ENCODE measurements at regions of chr4 and their contacts with region 1.

Region 1: DNA sequence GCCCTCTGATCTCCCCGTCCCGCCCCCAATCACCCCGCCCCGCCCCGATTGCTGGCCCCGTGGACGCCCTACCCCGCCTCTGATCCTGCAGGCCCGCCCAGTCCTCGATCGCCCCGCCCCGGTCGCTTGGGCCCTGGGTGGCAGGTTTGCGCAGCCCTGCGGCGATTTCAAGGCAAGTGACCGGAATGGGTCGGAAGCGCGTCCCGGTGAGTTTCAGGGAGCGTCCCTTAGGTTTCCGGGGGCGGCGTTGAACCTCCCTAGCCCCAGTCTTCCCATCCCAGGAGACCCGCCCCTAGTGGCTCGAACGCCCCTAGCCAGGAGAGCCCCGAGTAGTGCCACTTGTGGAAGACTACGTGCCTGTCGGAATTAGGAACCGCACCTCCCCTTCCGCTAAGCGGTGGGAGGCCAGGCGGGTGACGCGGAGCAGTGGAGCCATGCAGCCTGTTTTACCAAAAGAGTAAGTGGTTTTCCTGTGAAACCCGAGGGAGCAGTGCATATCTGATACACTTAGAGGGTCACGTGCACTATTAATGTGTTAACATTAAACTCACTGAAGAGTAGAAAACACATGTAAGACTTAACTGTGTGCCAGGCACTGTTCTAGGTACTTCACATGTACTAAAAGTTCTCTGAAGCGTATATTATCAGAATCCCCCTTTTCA is 354 bp upstream of the TEC start:
- DNase-seq: peak; percentile 91
- H3K4me3 Mint-ChIP-seq: peak overlapping the region; percentile 81
- H3K27ac Mint-ChIP-seq: peak overlapping the region; percentile 66
- H3K4me1 Mint-ChIP-seq: peaks cover 9% of the 10 kb centered on the region
- H3K27me3 Mint-ChIP-seq: no peaks in the 10 kb centered on the region
- CTCF ChIP-seq: no peak

Region 2: DNA sequence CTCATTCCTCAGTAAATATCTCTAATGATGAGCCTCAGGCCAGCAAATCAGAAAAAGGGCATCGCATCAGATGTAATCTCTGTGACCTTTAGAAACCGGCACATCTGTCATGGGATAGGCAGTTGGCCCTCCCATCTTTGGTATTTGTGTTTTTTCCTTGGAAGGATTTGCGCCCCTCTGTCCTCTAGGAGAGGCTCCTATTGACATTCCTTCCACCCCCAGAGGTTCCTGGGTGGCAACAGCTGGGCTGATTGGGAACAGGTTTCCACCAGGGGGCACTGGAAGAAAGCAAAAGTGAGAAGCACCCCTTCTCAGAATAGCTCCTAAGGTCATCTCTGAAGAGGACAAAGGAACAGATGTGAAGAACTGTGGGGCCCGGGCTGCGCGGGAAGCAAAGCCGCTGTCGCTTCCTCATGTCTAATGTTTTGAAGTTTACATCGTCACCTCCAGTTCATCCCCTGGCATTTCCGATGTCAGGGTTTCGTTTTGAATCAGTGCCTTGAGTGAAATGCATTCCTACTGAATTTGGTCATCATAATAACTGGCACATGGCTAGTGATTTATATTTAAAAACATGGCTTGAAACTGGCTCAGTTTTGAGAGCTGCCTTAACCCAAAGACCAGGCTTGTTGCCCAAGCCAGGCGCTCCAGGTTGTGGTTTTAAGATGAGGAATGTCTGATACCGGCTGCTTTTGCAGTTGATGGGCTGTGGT is 142.2 kb before region 1 on chr4:
- CTCF ChIA-PET with region 1: interaction called, 9 read pairs
- intact Hi-C with region 1: loop called (anchors 10 kb)
- DNase-seq: peak; percentile 62
- H3K4me3 Mint-ChIP-seq: peak overlapping the region; percentile 34
- H3K27ac Mint-ChIP-seq: peak overlapping the region; percentile 28
- H3K4me1 Mint-ChIP-seq: peaks cover 26% of the 10 kb centered on the region
- H3K27me3 Mint-ChIP-seq: no peaks in the 10 kb centered on the region
- CTCF ChIP-seq: peak; percentile 31

Region 3: DNA sequence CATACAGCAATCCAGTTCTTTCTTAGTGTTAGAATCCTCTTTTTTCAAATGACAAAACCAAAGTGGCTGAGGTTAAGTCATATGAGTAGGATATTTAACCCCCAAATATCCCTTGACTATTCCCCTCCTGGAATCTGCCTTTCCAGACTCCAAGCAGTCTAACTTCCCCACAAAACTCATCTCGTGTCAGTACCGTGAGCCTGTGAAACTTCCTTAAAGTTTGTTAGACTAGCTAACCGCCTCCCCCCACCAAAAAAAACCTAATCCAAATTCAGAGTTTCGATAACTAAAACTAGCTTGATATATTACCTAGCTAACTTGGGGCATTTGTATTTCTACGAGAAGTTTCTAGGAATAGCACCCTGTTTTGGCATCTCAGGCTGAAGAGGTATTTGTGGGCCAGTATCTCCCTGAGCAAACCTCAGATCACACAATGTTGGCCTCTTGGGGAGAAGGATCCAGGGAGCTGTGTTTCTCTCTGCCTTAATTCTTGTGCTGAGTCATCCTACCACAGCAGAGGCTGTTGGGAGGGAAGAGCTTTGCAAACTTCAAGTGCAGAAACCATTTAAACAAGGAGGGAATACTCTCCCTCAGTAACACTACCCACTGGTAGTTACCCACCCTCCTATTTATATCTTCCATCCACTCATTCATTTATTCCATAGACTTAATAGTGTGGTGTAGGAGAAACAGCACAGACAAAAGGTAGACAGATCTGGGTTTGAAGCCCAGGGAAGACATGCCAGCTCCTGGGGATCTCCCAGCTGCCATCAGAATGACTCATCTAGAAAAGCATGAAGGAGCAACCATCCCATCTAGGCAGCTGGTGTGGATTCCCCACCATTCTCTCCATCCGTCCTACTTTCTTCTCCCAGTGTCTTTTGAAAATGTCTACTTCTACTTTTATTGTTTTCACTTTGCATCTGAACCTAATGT is 96.7 kb before region 1 on chr4:
- CTCF ChIA-PET with region 1: no interaction called
- intact Hi-C with region 1: loop called (anchors 10 kb)
- DNase-seq: no peak
- H3K4me3 Mint-ChIP-seq: no peak overlapping the region
- H3K27ac Mint-ChIP-seq: no peak overlapping the region
- H3K4me1 Mint-ChIP-seq: peaks cover 8% of the 10 kb centered on the region
- H3K27me3 Mint-ChIP-seq: no peaks in the 10 kb centered on the region
- CTCF ChIP-seq: no peak

Measured in Calu3 (cell line).